ENCODE measurements at regions of chr7 and their contacts with region 1.

Region 1: DNA sequence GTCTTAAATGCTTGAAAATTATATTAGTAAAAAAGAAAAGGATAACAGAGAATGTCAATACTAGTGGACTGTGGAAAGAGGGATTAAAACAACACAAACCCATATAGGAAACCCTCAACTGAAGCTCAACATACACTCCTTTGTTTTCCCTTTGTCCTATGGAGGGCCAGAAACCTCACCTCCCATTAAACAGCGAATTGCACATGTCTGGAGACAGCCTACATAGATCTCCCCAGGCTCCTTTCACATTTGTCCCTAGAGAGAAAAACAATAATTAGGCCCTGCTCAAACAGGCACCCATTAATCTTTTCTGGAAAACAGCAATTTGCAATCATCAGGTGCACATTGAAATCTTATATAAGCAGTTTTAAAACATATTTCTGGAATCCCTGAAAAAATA is 87.6 kb upstream of the SEMA3D start:
- DNase-seq: no peak
- ATAC-seq: no peak
- H3K4me3 ChIP-seq: no peak overlapping the region
- H3K4me3 Mint-ChIP-seq: no peak overlapping the region
- H3K27ac ChIP-seq: no peak overlapping the region
- H3K27ac Mint-ChIP-seq: no peak overlapping the region
- H3K4me1 ChIP-seq: no peaks in the 10 kb centered on the region
- H3K4me1 Mint-ChIP-seq: no peaks in the 10 kb centered on the region
- H3K27me3 ChIP-seq: no peaks in the 10 kb centered on the region
- H3K27me3 Mint-ChIP-seq: no peaks in the 10 kb centered on the region
- CTCF ChIP-seq: no peak

Region 2: DNA sequence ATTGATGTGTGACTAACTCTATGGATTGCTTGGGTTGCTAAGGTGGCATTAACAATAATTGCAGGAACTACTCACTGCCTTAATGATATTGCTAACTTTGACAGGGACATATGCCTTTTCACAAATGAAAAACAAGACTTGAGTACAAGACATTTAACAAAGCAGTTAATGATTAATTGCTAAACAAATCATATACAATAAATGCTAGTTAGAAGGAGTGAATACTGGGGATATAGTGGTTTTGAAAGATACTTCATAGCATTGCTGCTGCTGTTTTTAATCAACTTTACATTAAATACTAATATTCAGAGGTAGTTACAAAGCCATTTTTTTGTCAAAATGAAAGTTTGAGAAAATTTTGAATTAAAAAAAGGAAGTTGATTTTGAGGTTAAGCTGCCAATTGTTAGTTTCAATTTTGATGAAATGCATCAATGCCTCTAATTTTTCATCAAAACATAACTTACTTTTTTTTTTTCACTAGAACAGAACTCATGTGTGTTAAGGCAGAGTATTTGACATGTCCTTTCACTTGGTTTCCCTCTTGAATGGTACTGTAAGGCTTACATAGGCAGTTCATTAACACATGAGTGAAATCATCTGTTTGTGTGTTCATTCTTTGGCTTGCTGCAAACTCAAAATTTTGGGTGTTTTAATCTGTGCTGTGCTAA is 18.6 kb after region 1 on chr7:
- CTCF ChIA-PET with region 1: no interaction called
- POLR2A ChIA-PET with region 1: no interaction called
- intact Hi-C with region 1: loop called in 1 of 2 experiments (anchors 1 kb)
- DNase-seq: no peak
- ATAC-seq: no peak
- H3K4me3 ChIP-seq: no peak overlapping the region
- H3K4me3 Mint-ChIP-seq: no peak overlapping the region
- H3K27ac ChIP-seq: no peak overlapping the region
- H3K27ac Mint-ChIP-seq: no peak overlapping the region
- H3K4me1 ChIP-seq: no peaks in the 10 kb centered on the region
- H3K4me1 Mint-ChIP-seq: no peaks in the 10 kb centered on the region
- H3K27me3 ChIP-seq: no peaks in the 10 kb centered on the region
- H3K27me3 Mint-ChIP-seq: no peaks in the 10 kb centered on the region
- CTCF ChIP-seq: no peak